ENCODE measurements at regions of chr14 and their contacts with region 1.

Region 1: GRCh38 chr14:28361486-28361885 is 405.1 kb upstream of the FOXG1 start:
- DNase-seq: no peak
- ATAC-seq: no peak
- H3K4me3 ChIP-seq: no peak overlapping the region
- H3K27ac ChIP-seq: no peak overlapping the region
- H3K4me1 ChIP-seq: no peaks in the 10 kb centered on the region
- H3K27me3 ChIP-seq: no peaks in the 10 kb centered on the region
- CTCF ChIP-seq: no peak

Region 2: DNA sequence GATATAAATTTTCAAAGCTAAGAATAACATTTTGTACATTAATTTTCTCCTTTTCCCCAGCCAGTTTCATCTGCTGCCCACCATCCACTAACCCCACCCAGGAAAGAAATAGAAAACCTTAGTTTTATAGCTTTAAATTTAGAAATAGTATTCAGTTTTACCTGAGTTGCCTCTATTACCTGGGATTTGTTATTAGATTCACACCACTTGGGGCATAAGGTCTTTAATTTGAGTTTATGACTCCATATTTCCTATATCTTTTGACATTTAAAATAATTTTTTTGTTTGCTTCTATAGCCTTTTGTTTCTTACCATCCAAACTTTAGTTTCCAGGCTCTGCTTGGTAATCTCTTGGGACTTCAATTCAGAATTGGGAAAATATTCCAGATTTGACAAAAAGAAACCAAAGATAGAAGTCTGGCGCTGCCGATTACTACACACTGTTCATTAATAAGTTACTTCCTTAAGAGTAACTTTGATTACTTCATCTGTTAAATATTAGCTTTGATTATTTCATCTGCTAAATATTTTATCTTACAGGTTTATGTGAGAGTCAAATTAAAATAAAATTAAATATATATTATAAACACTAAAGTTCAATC is 80.4 kb before region 1 on chr14:
- CTCF ChIA-PET with region 1: no interaction called
- POLR2A ChIA-PET with region 1: interaction called, 14 read pairs
- intact Hi-C with region 1: no loop called
- DNase-seq: no peak
- ATAC-seq: no peak
- H3K4me3 ChIP-seq: no peak overlapping the region
- H3K27ac ChIP-seq: no peak overlapping the region
- H3K4me1 ChIP-seq: no peaks in the 10 kb centered on the region
- H3K27me3 ChIP-seq: no peaks in the 10 kb centered on the region
- CTCF ChIP-seq: no peak

Region 3: GRCh38 chr14:28321475-28322244 is 39.8 kb before region 1 on chr14:
- CTCF ChIA-PET with region 1: no interaction called
- POLR2A ChIA-PET with region 1: no interaction called
- intact Hi-C with region 1: no loop called
- DNase-seq: peak; percentile 92
- ATAC-seq: peak; percentile 91
- H3K4me3 ChIP-seq: peak overlapping the region; percentile 54
- H3K27ac ChIP-seq: peak overlapping the region; percentile 86
- H3K4me1 ChIP-seq: peaks cover 37% of the 10 kb centered on the region
- H3K27me3 ChIP-seq: no peaks in the 10 kb centered on the region
- CTCF ChIP-seq: no peak

Region 4: DNA sequence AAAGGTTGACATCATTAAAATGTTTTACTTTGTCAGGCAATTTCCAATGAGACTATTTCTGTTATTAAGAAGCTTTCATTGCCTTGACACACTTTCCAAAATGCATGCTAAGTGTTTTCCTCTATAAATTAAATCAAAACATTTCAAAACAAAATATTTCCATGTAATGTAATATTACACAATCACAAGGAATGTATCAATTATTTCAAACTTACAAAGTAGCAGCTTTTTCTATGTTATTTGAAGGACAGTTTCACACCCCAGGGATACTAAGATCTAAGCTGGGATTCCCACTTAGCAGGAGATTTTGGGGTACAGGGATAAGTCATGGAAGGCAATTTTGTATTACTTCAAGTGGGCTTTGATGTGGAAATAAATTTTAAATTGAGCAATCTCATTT is 550.0 kb after region 1 on chr14:
- CTCF ChIA-PET with region 1: no interaction called
- POLR2A ChIA-PET with region 1: no interaction called
- intact Hi-C with region 1: no loop called
- DNase-seq: no peak
- ATAC-seq: no peak
- H3K4me3 ChIP-seq: no peak overlapping the region
- H3K27ac ChIP-seq: no peak overlapping the region
- H3K4me1 ChIP-seq: no peaks in the 10 kb centered on the region
- H3K27me3 ChIP-seq: peaks cover 44% of the 10 kb centered on the region; the same call in 1 of the 2 replicates
- CTCF ChIP-seq: no peak